Colonic mucosa (tissue), 4 donors: ENCODE measurements at regions of chr9 and their contacts with region 1.

Region 1: GRCh38 chr9:132901856-132902831 is 23.4 kb downstream of the SPACA9 start:
- DNase-seq: peak; percentile 65
- H3K4me3 ChIP-seq: no peak overlapping the region
- H3K27ac ChIP-seq: no peak overlapping the region
- H3K4me1 ChIP-seq: no peaks in the 10 kb centered on the region
- H3K27me3 ChIP-seq: no peaks in the 10 kb centered on the region
- CTCF ChIP-seq: peak; percentile 89

Region 2: DNA sequence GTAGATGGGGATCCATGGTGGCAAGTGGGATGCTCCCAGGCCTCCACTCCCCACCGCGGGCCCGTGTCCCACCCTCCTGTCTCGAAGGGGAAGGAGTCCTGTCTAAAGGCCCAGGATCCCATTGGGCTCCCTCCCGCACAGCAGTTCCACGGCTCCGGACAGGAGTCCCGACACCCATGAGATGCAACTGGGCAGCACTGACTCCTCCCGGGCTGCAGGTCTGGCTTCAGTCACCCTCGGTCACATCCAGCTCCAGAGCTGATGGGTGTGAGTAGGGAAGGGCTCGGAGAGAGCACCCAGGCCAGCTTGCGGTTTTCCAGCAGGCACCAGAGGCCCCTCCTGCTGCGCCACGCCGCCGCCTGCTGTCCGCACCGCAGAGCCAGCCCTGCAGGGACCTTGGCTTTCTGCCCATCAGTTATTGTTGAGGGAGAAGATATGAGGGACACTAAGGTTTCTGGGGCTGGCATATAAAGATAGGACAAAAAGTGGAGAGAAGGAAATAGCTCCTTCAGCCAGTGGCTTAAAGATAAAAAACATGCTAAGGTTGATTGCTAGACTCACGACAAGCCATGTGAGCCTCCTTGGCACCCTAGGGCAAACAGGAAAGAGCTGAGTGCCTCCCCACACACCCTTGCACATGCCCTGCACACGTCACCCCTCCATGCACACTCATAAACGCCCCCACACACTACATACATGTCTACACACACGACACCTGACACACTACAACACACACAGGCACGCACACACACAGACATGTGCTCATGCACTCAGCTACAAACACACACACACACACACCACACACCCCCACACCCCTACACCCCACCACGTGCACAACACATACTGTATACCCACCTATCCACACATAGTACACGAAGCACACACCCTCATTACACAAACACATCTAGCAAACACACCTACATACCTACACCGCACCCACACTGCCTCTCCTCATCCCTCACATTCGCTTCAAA is 103.0 kb before region 1 on chr9:
- intact Hi-C with region 1: no loop called
- DNase-seq: peak; percentile 75
- H3K4me3 ChIP-seq: no peak overlapping the region
- H3K27ac ChIP-seq: no peak overlapping the region
- H3K4me1 ChIP-seq: peaks cover 3% of the 10 kb centered on the region
- H3K27me3 ChIP-seq: no peaks in the 10 kb centered on the region
- CTCF ChIP-seq: peak; percentile 21

Region 3: GRCh38 chr9:132809677-132810271 is 92.4 kb before region 1 on chr9:
- intact Hi-C with region 1: loop called (anchors 5 kb)
- DNase-seq: no peak
- H3K4me3 ChIP-seq: no peak overlapping the region
- H3K27ac ChIP-seq: no peak overlapping the region
- H3K4me1 ChIP-seq: no peaks in the 10 kb centered on the region
- H3K27me3 ChIP-seq: peaks cover 1% of the 10 kb centered on the region
- CTCF ChIP-seq: no peak

Region 4: GRCh38 chr9:132857616-132858342 is 44.4 kb before region 1 on chr9:
- intact Hi-C with region 1: no loop called
- DNase-seq: no peak
- H3K4me3 ChIP-seq: no peak overlapping the region
- H3K27ac ChIP-seq: no peak overlapping the region
- H3K4me1 ChIP-seq: no peaks in the 10 kb centered on the region
- H3K27me3 ChIP-seq: no peaks in the 10 kb centered on the region
- CTCF ChIP-seq: no peak

Region 5: GRCh38 chr9:132973713-132974112 is 71.6 kb after region 1 on chr9:
- intact Hi-C with region 1: loop called (anchors 5 kb)
- DNase-seq: no peak
- H3K4me3 ChIP-seq: no peak overlapping the region
- H3K27ac ChIP-seq: no peak overlapping the region
- H3K4me1 ChIP-seq: peaks cover 5% of the 10 kb centered on the region
- H3K27me3 ChIP-seq: peaks cover 6% of the 10 kb centered on the region
- CTCF ChIP-seq: no peak